ENCODE measurements at regions of chr7 and their contacts with region 1.

Region 1: DNA sequence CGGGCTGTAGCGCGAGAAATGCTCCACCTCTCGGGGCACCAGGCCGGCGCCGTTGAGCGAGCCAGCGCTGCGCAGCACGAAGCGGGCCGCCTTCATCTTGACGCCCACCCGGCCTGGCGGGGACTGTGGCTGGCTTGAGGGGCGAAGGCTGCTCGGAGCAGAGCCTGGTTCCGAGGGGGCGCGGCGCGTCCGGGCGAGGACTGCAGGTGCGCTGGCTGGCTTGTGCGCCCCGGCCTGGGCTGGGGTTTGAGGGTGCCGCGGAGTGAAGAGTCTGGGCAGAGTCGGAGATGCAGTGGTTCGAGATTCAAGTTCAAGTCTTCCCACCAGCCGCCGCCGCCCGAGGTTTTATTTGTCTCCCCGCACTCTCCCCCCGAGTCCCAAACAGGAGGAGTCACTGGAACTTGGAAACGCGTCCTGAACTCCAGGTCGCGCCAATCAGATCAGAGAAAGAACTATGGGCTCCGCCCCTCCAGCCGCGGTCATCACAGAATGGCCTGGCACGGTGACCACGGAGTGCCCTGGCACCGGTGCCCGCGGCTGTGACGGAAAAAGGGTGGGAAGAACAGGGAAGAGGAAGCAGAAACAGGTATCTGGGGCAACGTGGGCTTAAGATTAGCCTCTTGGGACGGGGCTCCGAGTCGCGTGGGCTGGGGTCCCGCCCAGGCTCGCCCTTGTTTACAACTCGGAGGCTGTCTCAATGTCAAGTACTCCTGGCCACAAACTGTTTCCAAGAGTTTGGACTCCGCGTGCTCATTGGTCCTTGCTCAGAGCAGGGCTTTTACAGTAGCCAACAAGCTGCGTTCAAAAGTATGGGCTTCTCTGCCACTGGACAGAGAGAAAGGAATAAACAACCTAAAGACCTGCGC is at the start of gene PDK4:
- DNase-seq: peak; percentile 94
- H3K4me3 ChIP-seq: peak within 1 kb of the TSS; percentile 85
- H3K27ac ChIP-seq: peak within 1 kb of the TSS; percentile 89
- H3K4me1 ChIP-seq: no peaks in the 10 kb centered on the region
- H3K27me3 ChIP-seq: no peaks in the 10 kb centered on the region
- CTCF ChIP-seq: no peak
- total RNA-seq, gene PDK4: 11.1 to 27.6 TPM

Region 2: DNA sequence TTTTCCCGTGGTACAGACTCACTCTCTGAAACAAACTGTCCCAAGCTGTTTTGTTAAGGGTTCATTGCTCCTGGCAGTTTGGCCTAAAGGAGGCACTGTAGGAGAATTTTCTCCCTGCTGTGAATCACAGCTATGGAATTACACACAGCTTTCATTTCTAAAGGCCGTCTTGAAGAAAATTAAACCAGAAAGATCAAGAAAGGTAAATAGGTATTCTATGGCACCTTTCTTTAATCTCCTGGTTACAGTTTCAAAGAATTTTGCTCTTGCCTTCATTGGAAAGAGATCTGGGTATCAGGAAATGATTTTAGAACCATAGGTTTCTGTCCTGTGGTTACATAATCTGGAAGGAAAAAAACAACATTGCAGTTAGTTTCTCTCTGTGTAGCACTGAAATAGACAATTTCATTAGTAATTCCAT is 51.3 kb before region 1 on chr7:
- intact Hi-C with region 1: loop called (anchors 5 kb)
- DNase-seq: peak; percentile 68
- H3K4me3 ChIP-seq: no peak overlapping the region
- H3K27ac ChIP-seq: no peak overlapping the region
- H3K4me1 ChIP-seq: no peaks in the 10 kb centered on the region
- H3K27me3 ChIP-seq: no peaks in the 10 kb centered on the region
- CTCF ChIP-seq: peak; percentile 44

Region 3: DNA sequence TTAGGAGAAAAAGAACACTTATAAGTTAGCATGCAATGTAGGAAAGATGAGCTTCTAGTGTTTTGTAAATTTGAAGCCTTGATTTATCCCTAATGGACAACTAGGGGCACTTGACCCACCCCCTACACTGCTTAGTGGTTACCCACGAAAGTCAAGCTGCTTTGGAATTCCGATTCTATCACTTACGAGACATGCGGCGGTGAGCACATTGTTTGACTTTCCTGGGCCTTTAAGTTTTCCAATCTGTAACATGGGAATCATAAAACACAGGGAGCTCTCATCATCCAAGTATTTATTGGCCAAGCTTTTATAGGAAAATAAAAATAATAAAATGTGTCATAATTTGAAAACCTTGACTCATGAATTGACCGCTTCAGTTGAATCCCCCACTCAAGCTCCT is 78.6 kb after region 1 on chr7:
- intact Hi-C with region 1: loop called (anchors 10 kb)
- DNase-seq: no peak
- H3K4me3 ChIP-seq: no peak overlapping the region
- H3K27ac ChIP-seq: no peak overlapping the region
- H3K4me1 ChIP-seq: no peaks in the 10 kb centered on the region
- H3K27me3 ChIP-seq: no peaks in the 10 kb centered on the region
- CTCF ChIP-seq: no peak

Measured in colonic mucosa (tissue), 4 donors.